SK-N-SH (cell line): ENCODE measurements at regions of chr7 and their contacts with region 1.

Region 1: GRCh38 chr7:128135515-128136214 is 104.4 kb upstream of the LRRC4 start:
- DNase-seq: peak; percentile 98
- H3K4me3 ChIP-seq: peak overlapping the region; percentile 60 to 77
- H3K27ac ChIP-seq: no peak overlapping the region; a peak in 1 of 4 replicates
- H3K4me1 ChIP-seq: peaks cover 4 to 10% of the 10 kb centered on the region in 2 experiments; a peak in 2 of 4 replicates
- H3K27me3 ChIP-seq: 0 out of 2 replicates have a peak, but pooled peaks cover 9% of the 10 kb centered on the region
- CTCF ChIP-seq: peak; percentile 85
- EP300 ChIP-seq: peak in 1 of 2 experiments; percentile 74; a peak in 1 of 4 replicates
- RAD21 ChIP-seq: peak; percentile 60

Region 2: GRCh38 chr7:128020159-128020558 is 115.5 kb before region 1 on chr7:
- CTCF ChIA-PET with region 1: interaction called, 10 read pairs
- POLR2A ChIA-PET with region 1: no interaction called
- DNase-seq: peak; percentile 32
- H3K4me3 ChIP-seq: no peak overlapping the region; a peak in 1 of 4 replicates
- H3K27ac ChIP-seq: no peak overlapping the region
- H3K4me1 ChIP-seq: peaks cover 35 to 61% of the 10 kb centered on the region in 2 experiments
- H3K27me3 ChIP-seq: no peaks in the 10 kb centered on the region
- CTCF ChIP-seq: peak; percentile 63
- EP300 ChIP-seq: no peak
- RAD21 ChIP-seq: 0 out of 2 replicates have a peak, but pooled peaks have one; percentile 22

Region 3: GRCh38 chr7:128084896-128085608 is 50.6 kb before region 1 on chr7:
- CTCF ChIA-PET with region 1: interaction called, 35 read pairs
- POLR2A ChIA-PET with region 1: interaction called, 3 read pairs
- DNase-seq: peak; percentile 96
- H3K4me3 ChIP-seq: no peak overlapping the region
- H3K27ac ChIP-seq: peak overlapping the region; percentile 51 to 99; a peak in 3 of 4 replicates
- H3K4me1 ChIP-seq: peaks cover 0 to 63% of the 10 kb centered on the region in 2 experiments; a peak in 2 of 4 replicates
- H3K27me3 ChIP-seq: no peaks in the 10 kb centered on the region
- CTCF ChIP-seq: no peak
- EP300 ChIP-seq: peak in 1 of 2 experiments; percentile 99; a peak in 2 of 4 replicates
- RAD21 ChIP-seq: 0 out of 2 replicates have a peak, but pooled peaks have one; percentile 18

Region 4: GRCh38 chr7:128108641-128109423 is 26.8 kb before region 1 on chr7:
- CTCF ChIA-PET with region 1: interaction called, 19 read pairs
- POLR2A ChIA-PET with region 1: no interaction called
- DNase-seq: no peak
- H3K4me3 ChIP-seq: no peak overlapping the region
- H3K27ac ChIP-seq: no peak overlapping the region
- H3K4me1 ChIP-seq: peaks cover 0 to 16% of the 10 kb centered on the region in 2 experiments; a peak in 1 of 4 replicates
- H3K27me3 ChIP-seq: no peaks in the 10 kb centered on the region; the same call in 1 of the 2 replicates
- CTCF ChIP-seq: no peak
- EP300 ChIP-seq: no peak
- RAD21 ChIP-seq: no peak

Region 5: DNA sequence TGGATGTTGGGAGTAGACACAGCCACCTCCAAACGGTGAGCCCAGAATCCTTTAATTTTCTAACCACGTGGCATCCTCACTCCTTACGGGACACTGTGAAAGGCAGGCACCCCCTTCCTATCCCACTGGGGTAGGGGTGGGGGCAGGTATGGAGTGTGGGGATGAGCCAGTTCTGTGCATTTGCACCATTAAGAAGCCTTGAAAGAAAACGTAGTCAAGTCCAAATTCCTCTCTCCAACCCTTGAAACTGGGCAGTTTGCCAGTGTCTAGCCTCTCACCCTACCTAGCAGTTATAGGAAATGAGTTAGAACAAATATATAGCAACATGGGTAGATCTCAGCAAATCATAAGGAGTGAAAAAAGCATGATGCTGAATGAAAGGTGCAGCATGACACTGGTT is 13.0 kb after region 1 on chr7:
- CTCF ChIA-PET with region 1: interaction called, 40 read pairs
- POLR2A ChIA-PET with region 1: no interaction called
- DNase-seq: no peak
- H3K4me3 ChIP-seq: no peak overlapping the region
- H3K27ac ChIP-seq: no peak overlapping the region
- H3K4me1 ChIP-seq: no peaks in the 10 kb centered on the region; a peak in 1 of 4 replicates
- H3K27me3 ChIP-seq: peaks cover 28% of the 10 kb centered on the region; the same call in 1 of the 2 replicates
- CTCF ChIP-seq: no peak
- EP300 ChIP-seq: no peak
- RAD21 ChIP-seq: no peak

Region 6: DNA sequence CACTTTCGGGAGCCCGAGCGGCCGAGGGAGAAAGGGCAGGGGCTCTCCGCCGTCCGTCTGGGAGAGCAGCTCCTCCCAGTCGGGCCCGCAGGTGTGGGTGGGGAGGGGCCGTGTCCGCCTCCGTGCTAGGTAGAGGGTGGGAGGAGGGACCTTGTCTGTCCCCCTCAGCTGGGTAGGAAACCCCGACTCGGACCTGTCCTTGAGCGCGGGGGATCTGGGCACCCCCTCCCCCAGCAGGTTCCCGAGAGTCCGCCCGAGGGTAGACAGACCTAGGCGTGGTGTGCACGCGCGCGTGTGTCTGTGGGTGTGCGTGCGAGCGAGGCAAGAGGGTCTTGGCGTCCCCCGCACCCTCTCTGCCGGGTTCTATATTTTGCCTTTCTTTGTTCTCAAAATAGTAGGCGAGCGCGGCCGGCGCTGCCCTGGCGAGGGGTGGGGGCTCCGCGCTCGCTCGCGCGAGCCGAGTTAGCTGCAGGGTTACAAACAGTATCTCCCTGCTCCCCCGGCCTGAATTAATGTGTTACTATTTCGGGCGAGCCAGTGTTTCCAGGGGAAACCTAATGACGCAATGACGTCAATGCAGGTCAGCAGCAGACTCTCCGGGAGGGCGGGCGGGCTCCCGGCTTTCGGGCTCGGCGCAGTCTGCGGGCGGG is 31.5 kb after region 1 on chr7:
- CTCF ChIA-PET with region 1: interaction called, 53 read pairs
- POLR2A ChIA-PET with region 1: no interaction called
- DNase-seq: peak; percentile 96
- H3K4me3 ChIP-seq: peak overlapping the region; percentile 63 to 68
- H3K27ac ChIP-seq: no peak overlapping the region; a peak in 1 of 4 replicates
- H3K4me1 ChIP-seq: peaks cover 6 to 11% of the 10 kb centered on the region in 2 experiments; a peak in 2 of 4 replicates
- H3K27me3 ChIP-seq: no peaks in the 10 kb centered on the region; the same call in 1 of the 2 replicates
- CTCF ChIP-seq: no peak
- EP300 ChIP-seq: no peak
- RAD21 ChIP-seq: no peak